ENCODE measurements at regions of chr15 and their contacts with region 1.

Region 1: DNA sequence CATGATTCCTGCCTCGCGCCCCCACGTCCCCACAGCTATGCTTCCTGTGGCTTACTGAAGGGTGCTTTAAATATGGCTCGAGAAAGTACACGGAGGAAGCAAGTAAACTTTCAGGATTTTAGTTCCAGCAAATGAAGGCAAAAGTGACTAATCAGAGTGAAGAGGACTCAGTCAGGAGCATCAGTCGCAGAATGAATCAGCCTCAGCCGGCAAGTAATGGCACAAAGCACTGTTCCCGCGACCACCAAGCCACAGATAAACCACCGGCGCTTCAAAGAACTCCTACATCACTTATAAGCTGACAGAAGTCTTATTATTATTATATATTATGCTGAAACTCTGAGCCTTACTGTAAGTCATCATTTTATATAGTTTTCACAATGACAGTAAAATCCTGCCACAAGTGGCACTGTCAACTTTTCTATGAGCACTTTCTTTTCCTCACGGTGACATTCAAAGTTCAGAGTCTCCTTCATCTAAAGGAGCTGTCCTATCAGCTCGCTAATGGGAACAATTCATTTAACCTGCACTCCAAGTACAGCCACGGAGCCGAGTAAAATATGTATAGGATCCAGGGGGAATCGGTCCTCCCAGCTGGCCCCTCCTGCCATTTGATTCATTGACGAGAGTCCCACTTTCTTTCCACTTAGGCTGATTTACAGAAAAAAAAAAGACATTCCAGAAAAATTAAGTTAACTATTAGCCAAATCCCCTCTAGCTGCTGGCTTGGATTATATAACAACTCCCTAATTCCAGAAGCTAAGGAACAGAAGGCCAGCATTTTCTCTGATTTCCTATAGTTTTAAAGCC is 217.0 kb upstream of the ICE2 start:
- DNase-seq: peak; percentile 81
- H3K4me3 Mint-ChIP-seq: peak overlapping the region; percentile 66
- H3K27ac Mint-ChIP-seq: peak overlapping the region; percentile 79
- H3K4me1 Mint-ChIP-seq: peaks cover 42% of the 10 kb centered on the region
- H3K27me3 Mint-ChIP-seq: no peaks in the 10 kb centered on the region

Region 2: GRCh38 chr15:60673918-60674558 is 21.9 kb before region 1 on chr15:
- intact Hi-C with region 1: loop called (anchors 2 kb)
- DNase-seq: peak; percentile 61
- H3K4me3 Mint-ChIP-seq: no peak overlapping the region
- H3K27ac Mint-ChIP-seq: peak overlapping the region; percentile 39
- H3K4me1 Mint-ChIP-seq: peaks cover 8% of the 10 kb centered on the region
- H3K27me3 Mint-ChIP-seq: no peaks in the 10 kb centered on the region

Region 3: GRCh38 chr15:60713119-60714084 is 17.5 kb after region 1 on chr15:
- intact Hi-C with region 1: no loop called
- DNase-seq: no peak
- H3K4me3 Mint-ChIP-seq: no peak overlapping the region
- H3K27ac Mint-ChIP-seq: no peak overlapping the region
- H3K4me1 Mint-ChIP-seq: peaks cover 23% of the 10 kb centered on the region
- H3K27me3 Mint-ChIP-seq: no peaks in the 10 kb centered on the region

Region 4: GRCh38 chr15:60729850-60730458 is 34.0 kb after region 1 on chr15:
- intact Hi-C with region 1: loop called (anchors 5 kb)
- DNase-seq: peak; percentile 76
- H3K4me3 Mint-ChIP-seq: peak overlapping the region; percentile 63
- H3K27ac Mint-ChIP-seq: peak overlapping the region; percentile 79
- H3K4me1 Mint-ChIP-seq: peaks cover 41% of the 10 kb centered on the region
- H3K27me3 Mint-ChIP-seq: no peaks in the 10 kb centered on the region

Region 5: DNA sequence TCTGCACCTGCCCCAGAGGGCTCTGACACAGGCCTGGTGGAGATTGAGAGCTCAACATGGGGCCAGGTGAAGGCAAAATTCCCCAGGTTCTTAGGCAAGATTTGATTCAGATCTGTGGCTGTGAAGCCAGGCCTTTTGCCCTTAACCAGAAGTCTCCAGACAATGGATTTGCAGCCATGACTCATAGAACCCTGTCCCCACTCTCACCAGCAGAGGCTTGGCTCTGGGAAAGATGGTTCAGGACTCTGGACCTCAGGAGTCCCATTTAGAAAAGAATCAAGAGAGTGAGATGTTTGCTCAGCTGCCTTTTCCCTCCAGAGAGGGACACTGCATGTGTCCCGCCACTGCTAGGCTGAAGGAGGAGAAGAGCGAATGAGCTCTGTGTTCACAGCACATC is 144.4 kb after region 1 on chr15:
- intact Hi-C with region 1: loop called (anchors 2 kb)
- DNase-seq: no peak
- H3K4me3 Mint-ChIP-seq: peak overlapping the region; percentile 63
- H3K27ac Mint-ChIP-seq: peak overlapping the region; percentile 35
- H3K4me1 Mint-ChIP-seq: peaks cover 67% of the 10 kb centered on the region
- H3K27me3 Mint-ChIP-seq: peaks cover 16% of the 10 kb centered on the region

Measured in activated CD4-positive, alpha-beta T cell treated with anti-CD3 and anti-CD28 coated beads, Interleukin-2, amount 10 ng/mL, durations not matched to agents 24 days and 14 days (primary cell).